ENCODE measurements at regions of chr11 and their contacts with region 1.

Region 1: GRCh38 chr11:10933455-10934292 is 75.8 kb upstream of the ZBED5 start:
- DNase-seq: peak; percentile 55 to 80 (median 74)
- ATAC-seq: peak; percentile 95
- H3K4me3 ChIP-seq: peak overlapping the region; percentile 62
- H3K4me3 Mint-ChIP-seq: peak overlapping the region; percentile 77 to 92 (median 90)
- H3K27ac ChIP-seq: no peak overlapping the region
- H3K27ac Mint-ChIP-seq: peak overlapping the region in 5 of 9 donors; percentile 12 to 77 (median 33)
- H3K4me1 ChIP-seq: peaks cover 0 to 6% of the 10 kb centered on the region in 2 donors
- H3K4me1 Mint-ChIP-seq: peaks cover 10 to 21% (median 17%) of the 10 kb centered on the region in 7 donors
- H3K27me3 ChIP-seq: peaks cover 3 to 5% of the 10 kb centered on the region in 2 donors
- H3K27me3 Mint-ChIP-seq: peaks cover 9 to 63% (median 29%) of the 10 kb centered on the region in 5 donors

Region 2: GRCh38 chr11:10792398-10792975 is 141.2 kb before region 1 on chr11:
- CTCF ChIA-PET with region 1: interaction called, 4 read pairs
- POLR2A ChIA-PET with region 1: no interaction called
- intact Hi-C with region 1: loop called (anchors 1 kb)
- DNase-seq: peak; percentile 58 to 90 (median 77)
- ATAC-seq: peak; percentile 89
- H3K4me3 ChIP-seq: peak overlapping the region; percentile 40
- H3K4me3 Mint-ChIP-seq: peak overlapping the region in 6 of 10 donors; percentile 1 to 37 (median 16)
- H3K27ac ChIP-seq: no peak overlapping the region
- H3K27ac Mint-ChIP-seq: peak overlapping the region in 2 of 9 donors; percentile 15 to 24
- H3K4me1 ChIP-seq: peaks cover 4 to 20% of the 10 kb centered on the region in 2 donors
- H3K4me1 Mint-ChIP-seq: peaks cover 14 to 26% (median 23%) of the 10 kb centered on the region in 7 donors
- H3K27me3 ChIP-seq: no peaks in the 10 kb centered on the region
- H3K27me3 Mint-ChIP-seq: peaks cover 0 to 23% (median 8%) of the 10 kb centered on the region in 5 donors

Region 3: DNA sequence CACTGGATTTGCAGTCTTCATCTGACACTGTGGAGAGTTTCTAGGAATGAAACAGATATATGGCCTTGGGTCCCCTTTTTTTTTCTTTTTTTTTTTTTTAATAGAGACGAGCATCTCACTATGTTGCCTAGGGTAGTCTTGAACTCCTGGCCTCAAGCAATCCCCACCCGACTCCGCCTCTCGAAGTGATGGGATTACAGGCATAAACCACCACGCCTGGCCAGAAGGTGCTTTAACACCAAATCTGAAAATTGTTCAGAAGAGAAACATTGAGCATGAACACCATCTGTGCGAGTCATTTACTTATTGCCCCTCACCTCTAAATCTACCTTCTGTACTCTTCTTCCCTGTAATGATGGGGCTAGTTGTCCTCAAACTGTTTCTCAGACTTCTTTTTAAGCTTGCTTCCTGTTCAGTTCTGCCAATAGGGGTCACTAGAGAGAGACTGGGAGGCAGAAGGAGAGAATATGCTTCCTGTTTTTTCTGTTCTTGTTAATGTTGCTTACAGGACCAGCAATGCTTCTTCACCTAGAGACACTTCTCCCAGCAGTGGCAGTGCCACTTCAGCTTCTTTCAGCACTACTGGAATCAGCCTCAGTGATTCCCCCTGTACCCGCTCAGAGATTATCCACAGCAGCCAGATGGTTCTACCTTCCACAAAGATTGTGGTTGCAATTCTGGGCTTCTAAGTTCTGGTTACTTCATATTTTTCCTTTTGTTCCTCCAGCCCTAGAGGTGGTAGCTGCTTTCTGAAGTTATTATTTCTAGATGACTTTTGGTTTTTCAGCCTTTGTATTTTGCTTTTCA is 55.1 kb before region 1 on chr11:
- CTCF ChIA-PET with region 1: no interaction called
- POLR2A ChIA-PET with region 1: no interaction called
- intact Hi-C with region 1: loop called in 1 of 2 experiments (anchors 2 kb)
- DNase-seq: peak in 7 of 9 donors; percentile 52 to 69 (median 62)
- ATAC-seq: peak; percentile 89
- H3K4me3 ChIP-seq: no peak overlapping the region
- H3K4me3 Mint-ChIP-seq: no peak overlapping the region
- H3K27ac ChIP-seq: no peak overlapping the region
- H3K27ac Mint-ChIP-seq: peak overlapping the region in 8 of 9 donors; percentile 16 to 75 (median 50)
- H3K4me1 ChIP-seq: peaks cover 5 to 6% of the 10 kb centered on the region in 2 donors
- H3K4me1 Mint-ChIP-seq: peaks cover 7 to 27% (median 23%) of the 10 kb centered on the region in 7 donors
- H3K27me3 ChIP-seq: no peaks in the 10 kb centered on the region
- H3K27me3 Mint-ChIP-seq: no peaks in the 10 kb centered on the region

Region 4: GRCh38 chr11:11028017-11028692 is 94.5 kb after region 1 on chr11:
- CTCF ChIA-PET with region 1: interaction called, 38 read pairs
- POLR2A ChIA-PET with region 1: no interaction called
- intact Hi-C with region 1: no loop called
- DNase-seq: peak; percentile 59 to 82 (median 72)
- ATAC-seq: peak; percentile 97
- H3K4me3 ChIP-seq: no peak overlapping the region
- H3K4me3 Mint-ChIP-seq: no peak overlapping the region
- H3K27ac ChIP-seq: no peak overlapping the region
- H3K27ac Mint-ChIP-seq: peak overlapping the region in 5 of 9 donors; percentile 2 to 26 (median 12)
- H3K4me1 ChIP-seq: no peaks in the 10 kb centered on the region
- H3K4me1 Mint-ChIP-seq: peaks cover 0 to 6% (median 0%) of the 10 kb centered on the region in 7 donors
- H3K27me3 ChIP-seq: no peaks in the 10 kb centered on the region
- H3K27me3 Mint-ChIP-seq: peaks cover 0 to 32% (median 0%) of the 10 kb centered on the region in 5 donors

Region 5: GRCh38 chr11:11157185-11157584 is 223.5 kb after region 1 on chr11:
- CTCF ChIA-PET with region 1: interaction called, 19 read pairs
- POLR2A ChIA-PET with region 1: no interaction called
- intact Hi-C with region 1: loop called (anchors 1 kb)
- DNase-seq: peak in 8 of 9 donors; percentile 28 to 79 (median 72)
- ATAC-seq: peak; percentile 75
- H3K4me3 ChIP-seq: no peak overlapping the region
- H3K4me3 Mint-ChIP-seq: peak overlapping the region in 6 of 10 donors; percentile 75 to 92 (median 84)
- H3K27ac ChIP-seq: peak overlapping the region; percentile 72
- H3K27ac Mint-ChIP-seq: peak overlapping the region in 8 of 9 donors; percentile 86 to 99 (median 94)
- H3K4me1 ChIP-seq: peaks cover 11 to 28% of the 10 kb centered on the region in 2 donors
- H3K4me1 Mint-ChIP-seq: peaks cover 15 to 49% (median 44%) of the 10 kb centered on the region in 7 donors
- H3K27me3 ChIP-seq: no peaks in the 10 kb centered on the region
- H3K27me3 Mint-ChIP-seq: peaks cover 0 to 8% (median 0%) of the 10 kb centered on the region in 5 donors

Region 6: DNA sequence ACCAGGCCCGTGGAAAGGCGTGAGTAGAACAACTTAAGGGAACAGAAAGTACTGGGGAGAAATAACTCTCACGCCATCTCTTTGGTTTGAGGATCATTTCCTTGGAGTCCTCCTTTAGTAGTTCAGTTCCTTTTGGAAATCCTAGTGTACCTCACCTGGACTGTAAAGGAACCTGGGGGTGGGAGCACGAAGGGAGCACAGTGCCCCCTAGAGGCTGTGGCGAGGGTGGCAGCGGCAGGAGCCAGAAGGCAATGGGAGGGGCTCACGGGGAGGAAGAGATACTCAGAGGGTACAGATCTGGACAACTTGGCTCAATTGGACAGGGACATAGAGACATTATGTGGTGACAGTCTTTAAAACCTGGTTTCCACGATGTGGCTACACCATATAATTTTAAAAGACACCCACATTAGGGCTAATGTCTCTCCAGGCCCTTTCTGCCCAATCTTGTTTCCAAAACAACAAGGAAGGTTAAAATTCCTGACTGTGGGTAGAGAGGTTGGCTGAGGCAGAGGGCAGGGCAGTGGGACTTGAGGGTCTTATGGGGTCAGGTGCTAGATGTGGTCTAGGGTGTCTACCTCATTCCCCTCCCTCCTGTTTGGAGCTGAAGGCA is 332.4 kb after region 1 on chr11:
- CTCF ChIA-PET with region 1: no interaction called
- POLR2A ChIA-PET with region 1: no interaction called
- intact Hi-C with region 1: loop called in 1 of 2 experiments (anchors 5 kb)
- DNase-seq: peak in 8 of 9 donors; percentile 11 to 68 (median 28)
- ATAC-seq: peak; percentile 66
- H3K4me3 ChIP-seq: no peak overlapping the region
- H3K4me3 Mint-ChIP-seq: no peak overlapping the region
- H3K27ac ChIP-seq: no peak overlapping the region
- H3K27ac Mint-ChIP-seq: no peak overlapping the region
- H3K4me1 ChIP-seq: no peaks in the 10 kb centered on the region
- H3K4me1 Mint-ChIP-seq: peaks cover 0 to 3% (median 0%) of the 10 kb centered on the region in 7 donors
- H3K27me3 ChIP-seq: no peaks in the 10 kb centered on the region
- H3K27me3 Mint-ChIP-seq: peaks cover 0 to 11% (median 8%) of the 10 kb centered on the region in 5 donors

Region 7: DNA sequence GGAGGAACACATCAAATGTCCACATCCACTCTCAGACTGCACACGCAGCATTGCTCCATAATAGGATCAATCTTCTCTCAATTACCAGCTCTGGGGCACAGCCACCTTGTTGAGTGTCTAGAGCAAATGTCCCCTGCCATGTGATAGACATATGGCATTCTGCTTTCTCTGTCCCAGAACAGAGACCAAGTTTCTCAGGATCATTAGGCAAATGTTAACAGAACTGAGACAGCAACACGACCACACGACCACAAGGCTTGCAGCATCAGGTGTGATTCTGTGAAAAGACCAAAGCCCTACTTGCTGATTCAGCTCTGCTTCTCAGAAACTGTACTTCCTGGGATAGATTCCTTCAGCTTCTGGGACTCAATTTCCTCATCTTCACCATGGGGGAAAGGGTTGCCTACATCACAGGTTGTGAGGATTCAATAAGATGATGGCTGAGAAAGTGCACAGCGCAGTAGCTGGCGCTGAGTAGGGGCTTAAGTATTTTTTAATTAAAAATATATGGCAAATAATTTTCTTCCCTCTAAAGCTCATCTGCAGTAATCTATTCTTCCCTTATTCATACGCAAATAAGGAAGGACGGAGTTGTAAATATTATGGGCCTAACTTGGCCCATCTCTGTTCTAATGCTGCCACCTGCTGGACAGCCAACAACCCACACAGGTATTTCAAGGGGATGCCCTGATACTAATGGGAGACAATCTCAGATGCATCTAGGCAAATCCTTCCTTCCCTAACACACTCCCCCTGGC is 853.8 kb after region 1 on chr11:
- CTCF ChIA-PET with region 1: interaction called, 13 read pairs
- POLR2A ChIA-PET with region 1: no interaction called
- intact Hi-C with region 1: loop called (anchors 1 kb)
- DNase-seq: peak; percentile 34 to 69 (median 58)
- ATAC-seq: peak; percentile 88
- H3K4me3 ChIP-seq: no peak overlapping the region
- H3K4me3 Mint-ChIP-seq: no peak overlapping the region
- H3K27ac ChIP-seq: no peak overlapping the region
- H3K27ac Mint-ChIP-seq: no peak overlapping the region
- H3K4me1 ChIP-seq: no peaks in the 10 kb centered on the region
- H3K4me1 Mint-ChIP-seq: peaks cover 0 to 4% (median 0%) of the 10 kb centered on the region in 7 donors
- H3K27me3 ChIP-seq: peaks cover 0 to 4% of the 10 kb centered on the region in 2 donors
- H3K27me3 Mint-ChIP-seq: peaks cover 5 to 24% (median 9%) of the 10 kb centered on the region in 5 donors